ENCODE measurements at regions of chr7 and their contacts with region 1.

Region 1: GRCh38 chr7:92833024-92833765 is 3.2 kb downstream of the CDK6 start:
- DNase-seq: peak; percentile 85 to 94 (median 92)
- H3K4me3 ChIP-seq: peak overlapping the region; percentile 79 to 100 (median 97)
- H3K27ac ChIP-seq: peak overlapping the region; percentile 86 to 95
- H3K4me1 ChIP-seq: peaks cover 24 to 51% (median 47%) of the 10 kb centered on the region in 4 experiments
- H3K27me3 ChIP-seq: no peaks in the 10 kb centered on the region

Region 2: DNA sequence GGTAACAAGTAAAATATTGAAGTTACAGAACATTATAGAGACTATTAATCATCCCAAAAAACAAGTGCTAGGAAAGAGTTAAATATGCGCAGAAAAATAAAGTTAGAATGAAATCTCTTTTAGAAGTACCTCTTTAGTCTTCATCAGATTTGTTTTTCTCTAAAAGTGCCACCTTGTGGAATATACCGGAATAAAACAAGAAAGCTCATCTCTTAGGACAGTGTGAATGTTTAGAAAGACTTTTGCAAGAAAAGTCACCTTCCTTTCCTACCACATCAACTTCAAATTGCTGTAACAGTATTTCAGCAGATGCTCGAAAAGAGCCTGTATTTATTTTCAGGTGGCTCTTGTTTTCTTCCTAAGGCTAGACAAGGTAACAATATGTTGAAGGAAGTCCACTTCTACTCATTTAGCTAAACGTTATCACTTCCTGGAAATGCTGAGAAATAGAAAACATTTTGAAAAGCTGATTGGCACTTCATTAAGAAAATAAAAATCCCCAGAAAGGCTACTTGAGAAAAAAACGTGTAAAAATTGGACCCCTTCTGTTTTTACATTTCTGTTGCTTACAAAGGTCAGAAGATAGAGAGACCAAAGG is 223.2 kb before region 1 on chr7:
- CTCF ChIA-PET with region 1: interaction called, 24 read pairs
- POLR2A ChIA-PET with region 1: no interaction called
- DNase-seq: peak; percentile 45 to 71 (median 71)
- H3K4me3 ChIP-seq: no peak overlapping the region
- H3K27ac ChIP-seq: peak overlapping the region in 1 of 2 experiments; percentile 38
- H3K4me1 ChIP-seq: peaks cover 0 to 7% (median 0%) of the 10 kb centered on the region in 4 experiments
- H3K27me3 ChIP-seq: no peaks in the 10 kb centered on the region

Region 3: GRCh38 chr7:92691578-92691977 is 141.6 kb before region 1 on chr7:
- CTCF ChIA-PET with region 1: interaction called, 25 read pairs
- POLR2A ChIA-PET with region 1: interaction called, 4 read pairs
- DNase-seq: peak; percentile 73 to 85 (median 84)
- H3K4me3 ChIP-seq: no peak overlapping the region
- H3K27ac ChIP-seq: peak overlapping the region; percentile 37 to 45
- H3K4me1 ChIP-seq: peaks cover 0 to 31% (median 14%) of the 10 kb centered on the region in 4 experiments
- H3K27me3 ChIP-seq: no peaks in the 10 kb centered on the region

Region 4: DNA sequence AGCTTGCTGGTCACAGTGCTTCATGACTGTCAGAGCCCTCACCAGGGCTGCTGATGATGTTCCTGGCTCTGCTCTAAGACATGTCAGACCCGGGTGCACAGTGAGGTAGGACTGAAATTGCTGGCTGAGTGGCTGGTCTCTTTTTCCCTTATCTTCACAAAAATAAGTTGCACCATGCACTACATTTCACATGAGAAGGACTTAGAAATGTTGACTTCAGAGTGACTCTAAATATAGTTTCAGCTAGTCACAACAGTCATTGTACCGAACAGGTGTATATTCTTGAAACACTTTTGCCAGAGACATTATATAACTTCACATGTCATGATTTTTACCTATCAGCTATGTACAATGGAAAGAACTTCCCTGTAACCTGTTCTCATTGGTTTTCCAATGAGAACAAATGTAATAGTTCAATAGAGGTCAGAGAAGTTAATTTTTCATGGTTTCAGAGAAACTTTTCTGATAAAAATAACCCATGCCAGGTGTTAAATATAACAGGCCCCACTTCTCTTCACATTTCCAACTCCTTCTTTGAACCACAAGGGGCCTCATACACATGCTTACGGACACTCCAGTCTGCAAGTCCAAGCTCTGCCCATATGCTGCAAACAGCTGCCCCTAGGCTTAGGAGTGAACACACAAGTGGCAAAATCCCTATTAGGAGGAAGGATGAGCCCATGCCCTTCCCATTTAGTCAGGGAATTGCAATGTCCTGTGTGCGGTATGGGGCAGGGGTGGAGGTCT is 112.4 kb before region 1 on chr7:
- CTCF ChIA-PET with region 1: interaction called, 27 read pairs
- POLR2A ChIA-PET with region 1: interaction called, 6 read pairs
- DNase-seq: peak in 1 of 3 donors; percentile 49
- H3K4me3 ChIP-seq: no peak overlapping the region
- H3K27ac ChIP-seq: peak overlapping the region in 1 of 2 experiments; percentile 83
- H3K4me1 ChIP-seq: peaks cover 18 to 79% (median 36%) of the 10 kb centered on the region in 4 experiments
- H3K27me3 ChIP-seq: no peaks in the 10 kb centered on the region

Region 5: GRCh38 chr7:92754919-92755581 is 78.1 kb before region 1 on chr7:
- CTCF ChIA-PET with region 1: interaction called, 10 read pairs
- POLR2A ChIA-PET with region 1: interaction called, 21 read pairs
- DNase-seq: peak; percentile 88 to 99 (median 98)
- H3K4me3 ChIP-seq: peak overlapping the region in 6 of 7 experiments; percentile 17 to 52 (median 26)
- H3K27ac ChIP-seq: peak overlapping the region; percentile 93 to 97
- H3K4me1 ChIP-seq: peaks cover 39 to 86% (median 58%) of the 10 kb centered on the region in 4 experiments
- H3K27me3 ChIP-seq: no peaks in the 10 kb centered on the region

Region 6: DNA sequence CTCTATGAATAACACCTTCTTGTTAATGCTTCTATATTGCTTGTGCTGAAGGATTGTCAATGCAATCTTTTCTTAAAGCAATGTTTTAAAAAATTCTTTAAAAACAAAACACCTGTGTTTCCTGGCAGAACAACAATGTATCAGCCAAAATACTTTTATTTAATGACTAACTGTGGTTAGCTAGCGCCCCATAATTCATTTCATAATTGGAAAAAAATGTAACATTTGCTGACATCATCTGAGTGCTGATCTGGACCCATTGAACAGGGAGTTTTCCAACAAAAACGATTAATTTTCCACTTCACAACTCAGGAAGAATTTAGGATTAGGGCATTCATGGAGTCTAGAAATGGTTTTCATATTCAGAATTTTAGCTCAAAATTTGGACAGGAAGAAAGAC is 140.8 kb after region 1 on chr7:
- CTCF ChIA-PET with region 1: no interaction called
- POLR2A ChIA-PET with region 1: no interaction called
- DNase-seq: no peak
- H3K4me3 ChIP-seq: no peak overlapping the region
- H3K27ac ChIP-seq: no peak overlapping the region
- H3K4me1 ChIP-seq: peaks cover 0 to 6% (median 0%) of the 10 kb centered on the region in 4 experiments
- H3K27me3 ChIP-seq: no peaks in the 10 kb centered on the region

Measured in common myeloid progenitor, CD34-positive (primary cell).